ENCODE measurements at regions of chr3 and their contacts with region 1.

Region 1: GRCh38 chr3:171001957-171002694 is 24.4 kb downstream of the SLC2A2 start:
- DNase-seq: peak; percentile 84 to 87
- H3K4me3 ChIP-seq: peak overlapping the region; percentile 14; the same call in 1 of the 2 replicates
- H3K4me3 Mint-ChIP-seq: peak overlapping the region; percentile 62
- H3K27ac Mint-ChIP-seq: peak overlapping the region; percentile 61
- H3K4me1 ChIP-seq: peaks cover 62% of the 10 kb centered on the region
- H3K4me1 Mint-ChIP-seq: peaks cover 24% of the 10 kb centered on the region
- H3K27me3 ChIP-seq: no peaks in the 10 kb centered on the region
- H3K27me3 Mint-ChIP-seq: no peaks in the 10 kb centered on the region
- CTCF ChIP-seq: no peak

Region 2: GRCh38 chr3:171028025-171028778 is 26.1 kb after region 1 on chr3:
- CTCF ChIA-PET with region 1: no interaction called
- POLR2A ChIA-PET with region 1: no interaction called
- intact Hi-C with region 1: loop called (anchors 1 kb)
- DNase-seq: peak; percentile 73 to 80
- H3K4me3 ChIP-seq: peak overlapping the region; percentile 42
- H3K4me3 Mint-ChIP-seq: no peak overlapping the region
- H3K27ac Mint-ChIP-seq: no peak overlapping the region
- H3K4me1 ChIP-seq: peaks cover 40% of the 10 kb centered on the region
- H3K4me1 Mint-ChIP-seq: peaks cover 20% of the 10 kb centered on the region
- H3K27me3 ChIP-seq: no peaks in the 10 kb centered on the region
- H3K27me3 Mint-ChIP-seq: no peaks in the 10 kb centered on the region
- CTCF ChIP-seq: no peak

Region 3: GRCh38 chr3:171383206-171384018 is 381.3 kb after region 1 on chr3:
- CTCF ChIA-PET with region 1: no interaction called
- POLR2A ChIA-PET with region 1: no interaction called
- intact Hi-C with region 1: no loop called
- DNase-seq: no peak
- H3K4me3 ChIP-seq: no peak overlapping the region
- H3K4me3 Mint-ChIP-seq: no peak overlapping the region
- H3K27ac Mint-ChIP-seq: no peak overlapping the region
- H3K4me1 ChIP-seq: no peaks in the 10 kb centered on the region
- H3K4me1 Mint-ChIP-seq: peaks cover 12% of the 10 kb centered on the region
- H3K27me3 ChIP-seq: no peaks in the 10 kb centered on the region
- H3K27me3 Mint-ChIP-seq: no peaks in the 10 kb centered on the region
- CTCF ChIP-seq: no peak

Measured in Caco-2 (cell line).